Testis (tissue), 5 donors: ENCODE measurements at regions of chr10 and their contacts with region 1.

Region 1: GRCh38 chr10:32256613-32257437 is 90.1 kb downstream of the EPC1 start:
- DNase-seq: peak; percentile 75
- H3K4me3 ChIP-seq: no peak overlapping the region
- H3K27ac ChIP-seq: no peak overlapping the region
- H3K4me1 ChIP-seq: peaks cover 4% of the 10 kb centered on the region
- H3K27me3 ChIP-seq: no peaks in the 10 kb centered on the region
- CTCF ChIP-seq: peak; percentile 77 to 84 (median 79)
- POLR2A ChIP-seq: no peak

Region 2: GRCh38 chr10:32346134-32346550 is 89.3 kb after region 1 on chr10:
- intact Hi-C with region 1: loop called (anchors 10 kb)
- DNase-seq: peak; percentile 96
- H3K4me3 ChIP-seq: peak overlapping the region; percentile 98 to 99
- H3K27ac ChIP-seq: peak overlapping the region; percentile 100
- H3K4me1 ChIP-seq: peaks cover 23% of the 10 kb centered on the region
- H3K27me3 ChIP-seq: no peaks in the 10 kb centered on the region
- CTCF ChIP-seq: peak; percentile 89 to 98 (median 95)
- POLR2A ChIP-seq: no peak